Caco-2 (cell line): ENCODE measurements at regions of chr17 and their contacts with region 1.

Region 1: GRCh38 chr17:28878981-28879380 is 18.6 kb downstream of the FLOT2 start:
- DNase-seq: peak; percentile 79 to 82
- H3K4me3 ChIP-seq: no peak overlapping the region
- H3K4me3 Mint-ChIP-seq: no peak overlapping the region
- H3K27ac Mint-ChIP-seq: peak overlapping the region; percentile 30
- H3K4me1 ChIP-seq: 0 out of 2 replicates have a peak, but pooled peaks cover 6% of the 10 kb centered on the region
- H3K4me1 Mint-ChIP-seq: peaks cover 16% of the 10 kb centered on the region
- H3K27me3 ChIP-seq: no peaks in the 10 kb centered on the region
- H3K27me3 Mint-ChIP-seq: no peaks in the 10 kb centered on the region
- CTCF ChIP-seq: peak; percentile 73 to 85

Region 2: GRCh38 chr17:28777178-28777577 is 101.8 kb before region 1 on chr17:
- CTCF ChIA-PET with region 1: no interaction called
- POLR2A ChIA-PET with region 1: no interaction called
- intact Hi-C with region 1: no loop called
- DNase-seq: no peak
- H3K4me3 ChIP-seq: no peak overlapping the region
- H3K4me3 Mint-ChIP-seq: no peak overlapping the region
- H3K27ac Mint-ChIP-seq: no peak overlapping the region
- H3K4me1 ChIP-seq: no peaks in the 10 kb centered on the region
- H3K4me1 Mint-ChIP-seq: no peaks in the 10 kb centered on the region
- H3K27me3 ChIP-seq: no peaks in the 10 kb centered on the region
- H3K27me3 Mint-ChIP-seq: no peaks in the 10 kb centered on the region
- CTCF ChIP-seq: no peak

Region 3: GRCh38 chr17:28828294-28829040 is 50.5 kb before region 1 on chr17:
- CTCF ChIA-PET with region 1: no interaction called
- POLR2A ChIA-PET with region 1: no interaction called
- intact Hi-C with region 1: loop called (anchors 10 kb)
- DNase-seq: no peak
- H3K4me3 ChIP-seq: no peak overlapping the region
- H3K4me3 Mint-ChIP-seq: no peak overlapping the region
- H3K27ac Mint-ChIP-seq: no peak overlapping the region
- H3K4me1 ChIP-seq: no peaks in the 10 kb centered on the region
- H3K4me1 Mint-ChIP-seq: peaks cover 4% of the 10 kb centered on the region
- H3K27me3 ChIP-seq: no peaks in the 10 kb centered on the region
- H3K27me3 Mint-ChIP-seq: no peaks in the 10 kb centered on the region
- CTCF ChIP-seq: no peak

Region 4: GRCh38 chr17:28849281-28849680 is 29.7 kb before region 1 on chr17:
- CTCF ChIA-PET with region 1: interaction called, 3 read pairs
- POLR2A ChIA-PET with region 1: no interaction called
- intact Hi-C with region 1: loop called (anchors 1 kb)
- DNase-seq: no peak
- H3K4me3 ChIP-seq: no peak overlapping the region
- H3K4me3 Mint-ChIP-seq: no peak overlapping the region
- H3K27ac Mint-ChIP-seq: no peak overlapping the region
- H3K4me1 ChIP-seq: no peaks in the 10 kb centered on the region
- H3K4me1 Mint-ChIP-seq: no peaks in the 10 kb centered on the region
- H3K27me3 ChIP-seq: no peaks in the 10 kb centered on the region
- H3K27me3 Mint-ChIP-seq: no peaks in the 10 kb centered on the region
- CTCF ChIP-seq: peak in 1 of 2 experiments; percentile 15

Region 5: DNA sequence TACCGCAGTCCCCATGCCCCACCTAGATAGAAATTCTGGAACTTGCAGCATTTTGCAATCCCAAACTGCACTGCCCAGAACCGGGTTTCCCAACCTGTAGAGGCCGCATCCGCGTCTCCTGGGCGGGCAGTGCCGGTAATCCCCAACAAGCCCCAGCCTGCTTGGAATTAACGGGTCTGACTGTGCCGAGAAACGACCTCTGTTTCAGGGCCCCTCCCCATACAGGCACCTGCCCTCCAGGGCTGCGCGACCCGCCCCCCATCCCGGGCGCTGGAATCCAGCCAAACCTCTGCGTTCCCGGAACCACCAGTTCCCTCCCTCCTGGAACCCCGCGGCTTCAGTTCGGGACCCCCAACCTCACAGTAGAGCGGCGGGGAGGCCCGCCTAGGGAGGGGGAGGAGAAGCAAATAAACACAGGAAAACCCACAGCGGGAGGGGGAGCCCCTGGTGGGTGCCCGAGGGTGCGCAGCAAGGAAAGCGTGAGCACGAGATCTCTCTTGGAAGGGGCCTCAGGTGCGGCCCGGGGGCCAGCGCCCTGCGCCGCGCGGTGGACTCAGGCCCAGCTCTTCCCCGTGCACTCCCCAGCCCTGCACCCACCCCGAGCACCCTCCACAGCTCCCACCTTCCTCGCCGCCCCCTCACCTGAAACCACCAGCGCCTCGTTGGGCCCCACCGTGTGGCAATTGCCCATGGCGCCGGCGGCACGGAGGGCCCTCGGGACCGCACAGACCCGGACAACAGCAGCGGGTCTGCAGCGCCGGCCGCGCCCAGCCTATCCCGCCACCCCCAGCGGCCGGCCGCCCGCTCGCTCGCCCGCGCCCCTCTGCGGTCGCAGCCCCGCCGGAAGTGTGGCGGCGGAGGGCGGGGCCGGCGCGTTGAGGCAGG is 18.1 kb after region 1 on chr17 and contains the start of gene FLOT2:
- CTCF ChIA-PET with region 1: no interaction called
- POLR2A ChIA-PET with region 1: no interaction called
- intact Hi-C with region 1: no loop called
- DNase-seq: peak; percentile 87
- H3K4me3 ChIP-seq: peak within 1 kb of the TSS; percentile 86
- H3K4me3 Mint-ChIP-seq: peak within 1 kb of the TSS; percentile 89
- H3K27ac Mint-ChIP-seq: peak within 1 kb of the TSS; percentile 80
- H3K4me1 ChIP-seq: peaks cover 23% of the 10 kb centered on the region
- H3K4me1 Mint-ChIP-seq: peaks cover 14% of the 10 kb centered on the region
- H3K27me3 ChIP-seq: no peaks in the 10 kb centered on the region
- H3K27me3 Mint-ChIP-seq: no peaks in the 10 kb centered on the region
- CTCF ChIP-seq: peak; percentile 40 to 49
- total RNA-seq, gene FLOT2: 182 and 189 TPM in 2 replicates